ENCODE measurements at regions of chr4 and their contacts with region 1.

Region 1: DNA sequence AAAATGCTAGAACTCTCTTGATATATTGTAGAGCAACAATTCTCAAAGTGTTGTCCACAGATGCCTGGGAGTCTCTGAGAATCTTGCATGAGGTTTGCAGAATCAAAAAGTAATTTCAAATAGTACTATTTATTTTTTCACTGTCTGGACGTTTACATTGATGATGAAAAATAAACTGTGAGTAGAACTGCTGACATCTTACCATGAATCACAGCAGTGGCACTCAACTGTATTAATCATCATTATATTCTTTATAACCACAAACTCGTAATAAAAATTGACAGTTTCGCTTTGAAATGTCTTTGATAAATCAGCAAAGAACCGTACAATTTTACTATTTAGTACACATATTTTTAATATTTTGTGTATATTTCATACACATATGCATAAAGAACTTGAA is 94.5 kb downstream of the NAF1 start:
- DNase-seq: no peak
- H3K4me3 ChIP-seq: no peak overlapping the region
- H3K27ac ChIP-seq: no peak overlapping the region
- H3K4me1 ChIP-seq: no peaks in the 10 kb centered on the region
- CTCF ChIP-seq: no peak

Region 2: DNA sequence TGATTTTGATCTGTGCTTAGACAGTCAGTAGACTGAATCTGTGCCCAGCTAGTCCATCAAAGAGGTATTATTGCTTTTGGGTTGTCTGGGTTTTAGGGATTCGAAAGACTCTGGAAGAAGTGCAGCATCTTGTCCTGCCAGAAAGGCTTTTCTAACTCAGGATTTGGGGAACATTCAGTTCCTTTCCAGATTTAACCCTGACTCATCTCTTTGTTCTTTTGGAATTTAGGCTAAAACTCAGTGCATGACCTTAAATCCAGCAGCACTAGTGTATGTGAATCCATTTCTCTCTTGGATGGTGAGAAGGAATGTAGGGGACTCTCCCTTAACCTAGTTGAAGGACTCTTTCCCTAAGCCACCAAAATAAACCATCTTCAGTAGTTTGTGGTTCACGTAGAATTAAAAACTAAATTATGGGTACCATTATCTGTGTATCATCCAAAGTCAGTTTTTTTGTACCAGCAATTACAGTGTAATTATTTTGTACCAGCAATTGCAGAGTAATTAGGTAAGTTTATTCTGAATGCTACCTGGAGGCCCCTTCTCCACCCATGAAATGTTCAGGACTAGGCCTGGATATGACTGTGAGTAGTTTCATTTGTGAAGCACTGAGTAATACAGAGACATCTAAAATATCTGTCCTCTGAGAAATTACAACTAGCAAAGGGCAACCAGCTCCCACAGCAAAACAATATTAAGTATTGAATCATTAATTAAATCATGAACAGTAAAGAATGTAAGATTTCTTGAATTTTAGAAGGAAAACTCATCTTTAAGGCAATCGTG is 806.3 kb after region 1 on chr4:
- CTCF ChIA-PET with region 1: no interaction called
- POLR2A ChIA-PET with region 1: no interaction called
- intact Hi-C with region 1: loop called (anchors 10 kb)
- DNase-seq: no peak
- H3K4me3 ChIP-seq: no peak overlapping the region
- H3K27ac ChIP-seq: no peak overlapping the region
- H3K4me1 ChIP-seq: no peaks in the 10 kb centered on the region
- CTCF ChIP-seq: no peak

Measured in OCI-LY7 (cell line).